GM18951 (cell line): ENCODE measurements at regions of chr7 and their contacts with region 1.

Region 1: DNA sequence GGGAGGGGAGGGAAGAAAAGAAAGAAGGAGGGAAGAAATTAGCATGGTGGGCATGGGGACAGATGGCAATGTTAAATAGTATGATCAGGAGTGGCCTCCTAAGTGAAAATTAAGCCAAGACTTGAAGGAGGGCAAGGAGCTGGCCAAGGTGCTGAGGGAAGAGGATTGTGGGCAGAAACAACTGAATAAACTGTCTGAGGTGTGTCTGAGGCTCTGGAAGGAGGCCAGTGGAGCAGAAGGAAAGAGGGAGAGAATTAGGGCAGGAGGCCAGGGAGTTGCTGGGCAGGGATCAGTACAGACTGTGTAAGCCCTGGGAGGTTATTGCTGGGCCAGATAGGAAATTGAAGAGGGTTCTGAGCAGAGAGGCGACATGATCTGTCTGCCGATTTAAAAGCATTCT is 40.6 kb upstream of the VKORC1L1 start:
- POLR2A ChIP-seq: no peak

Region 2: GRCh38 chr7:65397730-65398142 is 434.5 kb before region 1 on chr7:
- in situ Hi-C with region 1: no loop called
- POLR2A ChIP-seq: no peak

Region 3: GRCh38 chr7:65731562-65732035 is 100.7 kb before region 1 on chr7:
- in situ Hi-C with region 1: loop called (anchors 25 kb)
- POLR2A ChIP-seq: no peak